ENCODE measurements at regions of chr6 and their contacts with region 1.

Region 1: GRCh38 chr6:2353412-2354137 is 108.2 kb upstream of the GMDS start:
- DNase-seq: peak; percentile 84
- H3K4me3 Mint-ChIP-seq: no peak overlapping the region
- H3K27ac Mint-ChIP-seq: no peak overlapping the region
- H3K4me1 Mint-ChIP-seq: no peaks in the 10 kb centered on the region
- H3K27me3 Mint-ChIP-seq: no peaks in the 10 kb centered on the region

Region 2: GRCh38 chr6:2103644-2104523 is 249.7 kb before region 1 on chr6:
- CTCF ChIA-PET with region 1: no interaction called
- intact Hi-C with region 1: loop called (anchors 2 kb)
- DNase-seq: no peak
- H3K4me3 Mint-ChIP-seq: no peak overlapping the region
- H3K27ac Mint-ChIP-seq: no peak overlapping the region
- H3K4me1 Mint-ChIP-seq: no peaks in the 10 kb centered on the region
- H3K27me3 Mint-ChIP-seq: no peaks in the 10 kb centered on the region

Region 3: GRCh38 chr6:2209226-2209809 is 144.3 kb before region 1 on chr6:
- CTCF ChIA-PET with region 1: interaction called, 20 read pairs
- intact Hi-C with region 1: loop called (anchors 1 kb)
- DNase-seq: peak; percentile 57
- H3K4me3 Mint-ChIP-seq: no peak overlapping the region
- H3K27ac Mint-ChIP-seq: no peak overlapping the region
- H3K4me1 Mint-ChIP-seq: no peaks in the 10 kb centered on the region
- H3K27me3 Mint-ChIP-seq: no peaks in the 10 kb centered on the region

Region 4: DNA sequence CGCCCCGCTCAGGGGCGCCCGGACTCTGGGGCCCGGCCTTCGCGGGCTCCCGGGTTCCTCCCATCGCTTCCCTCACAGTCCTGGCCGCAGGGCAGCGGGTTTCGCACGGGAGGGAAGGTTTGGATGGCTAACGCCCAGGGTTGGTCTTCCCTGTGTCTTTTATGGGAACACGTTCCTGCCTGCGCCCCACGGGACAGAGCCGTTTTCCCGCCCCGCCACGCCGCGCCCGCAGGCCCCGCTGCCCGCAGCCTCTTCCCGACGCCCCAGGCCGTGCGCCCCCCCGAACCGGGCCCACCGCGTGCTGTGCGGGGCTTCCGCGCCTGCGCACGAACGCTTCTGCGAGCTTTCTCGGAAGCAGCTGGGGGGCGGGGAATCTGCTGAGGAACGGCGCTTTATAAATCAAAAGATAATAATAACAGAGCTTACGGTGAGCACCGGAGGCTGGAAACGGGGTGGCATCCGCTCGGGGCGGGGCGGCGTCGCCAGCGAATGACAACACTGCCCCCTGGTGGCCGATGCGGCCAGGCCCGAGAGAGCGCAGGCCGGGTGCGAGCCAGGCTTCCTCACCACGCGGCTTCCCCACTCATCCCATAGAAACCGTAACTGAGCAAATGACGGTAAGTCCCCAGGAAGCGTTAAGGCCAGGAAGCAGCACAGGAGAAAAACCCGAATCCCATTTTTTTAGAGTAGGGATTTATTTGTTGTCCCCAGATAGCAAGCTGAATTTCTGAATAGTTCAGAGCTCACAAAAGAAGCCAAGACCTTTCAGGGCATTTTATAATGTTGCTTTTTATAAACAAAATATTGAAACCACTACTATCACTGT is 280.8 kb after region 1 on chr6:
- CTCF ChIA-PET with region 1: interaction called, 6 read pairs
- intact Hi-C with region 1: loop called (anchors 1 kb)
- DNase-seq: peak; percentile 88
- H3K4me3 Mint-ChIP-seq: peak overlapping the region; percentile 58
- H3K27ac Mint-ChIP-seq: no peak overlapping the region
- H3K4me1 Mint-ChIP-seq: peaks cover 3% of the 10 kb centered on the region
- H3K27me3 Mint-ChIP-seq: peaks cover 11% of the 10 kb centered on the region

Measured in activated naive CD4-positive, alpha-beta T cell treated with anti-CD3 and anti-CD28 coated beads for 36 hours (primary cell).